PC-9 (cell line): ENCODE measurements at regions of chr15 and their contacts with region 1.

Region 1: GRCh38 chr15:84588053-84588874 is 12.5 kb upstream of the ZSCAN2 start:
- DNase-seq: peak; percentile 57 to 83
- H3K4me3 ChIP-seq: peak overlapping the region; percentile 54; the same call in 1 of the 2 replicates
- H3K27ac ChIP-seq: no peak overlapping the region
- H3K4me1 ChIP-seq: no peaks in the 10 kb centered on the region; the same call in 1 of the 2 replicates
- H3K27me3 ChIP-seq: no peaks in the 10 kb centered on the region
- CTCF ChIP-seq: peak; percentile 81

Region 2: DNA sequence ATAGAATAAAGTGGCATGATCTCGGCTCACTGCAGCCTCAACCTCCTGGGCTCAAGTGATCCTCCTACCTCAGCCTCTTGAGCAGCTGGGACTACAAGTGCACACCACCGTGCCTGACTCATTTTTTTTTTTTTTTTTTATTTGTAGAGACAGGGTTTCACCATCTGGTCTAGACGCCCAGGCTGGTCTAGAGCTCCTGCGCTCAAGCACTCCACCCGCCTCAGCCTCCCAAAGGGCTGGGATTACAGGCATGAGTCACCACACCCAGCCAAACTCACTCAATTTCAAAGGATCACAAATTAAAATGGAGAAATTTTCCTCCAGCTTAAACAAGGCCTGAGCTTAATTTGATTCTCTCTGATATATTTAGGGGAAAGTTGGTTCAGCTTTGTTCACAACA is 97.0 kb after region 1 on chr15:
- CTCF ChIA-PET with region 1: interaction called, 10 read pairs
- POLR2A ChIA-PET with region 1: no interaction called
- intact Hi-C with region 1: no loop called
- DNase-seq: peak; percentile 59 to 78
- H3K4me3 ChIP-seq: no peak overlapping the region
- H3K27ac ChIP-seq: peak overlapping the region; percentile 57
- H3K4me1 ChIP-seq: peaks cover 19% of the 10 kb centered on the region
- H3K27me3 ChIP-seq: no peaks in the 10 kb centered on the region
- CTCF ChIP-seq: no peak

Region 3: DNA sequence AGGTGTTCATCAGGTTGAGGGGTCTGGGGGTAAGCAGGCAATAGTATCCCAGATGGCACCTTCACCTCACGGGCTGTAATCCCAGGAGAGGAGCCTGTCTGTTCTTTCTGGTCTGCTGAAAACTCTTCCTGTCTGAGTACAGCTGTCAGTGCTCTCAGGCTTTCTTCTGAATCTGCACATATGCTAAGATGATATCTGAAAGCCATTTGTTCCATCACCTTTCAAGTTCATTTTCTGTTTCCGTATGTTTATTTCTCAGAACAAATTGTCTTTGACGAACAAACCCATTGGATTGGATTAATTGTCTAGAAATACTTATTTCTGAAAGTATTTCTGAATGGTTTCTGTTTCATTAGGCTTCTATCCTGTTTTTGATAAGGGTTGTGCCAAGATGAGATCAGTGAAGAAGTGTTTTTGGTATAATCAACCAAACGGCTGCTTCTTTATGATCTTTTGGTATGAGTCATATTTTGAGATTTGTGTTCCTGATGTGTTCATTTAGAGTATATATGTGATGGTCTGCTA is 173.4 kb after region 1 on chr15:
- CTCF ChIA-PET with region 1: no interaction called
- POLR2A ChIA-PET with region 1: no interaction called
- intact Hi-C with region 1: no loop called
- DNase-seq: no peak
- H3K4me3 ChIP-seq: no peak overlapping the region
- H3K27ac ChIP-seq: no peak overlapping the region
- H3K4me1 ChIP-seq: no peaks in the 10 kb centered on the region
- H3K27me3 ChIP-seq: no peaks in the 10 kb centered on the region
- CTCF ChIP-seq: no peak

Region 4: GRCh38 chr15:85044251-85044853 is 456.1 kb after region 1 on chr15:
- CTCF ChIA-PET with region 1: no interaction called
- POLR2A ChIA-PET with region 1: no interaction called
- intact Hi-C with region 1: loop called (anchors 5 kb)
- DNase-seq: peak in 1 of 2 experiments; percentile 47
- H3K4me3 ChIP-seq: no peak overlapping the region
- H3K27ac ChIP-seq: no peak overlapping the region
- H3K4me1 ChIP-seq: peaks cover 44% of the 10 kb centered on the region
- H3K27me3 ChIP-seq: no peaks in the 10 kb centered on the region
- CTCF ChIP-seq: peak; percentile 64

Region 5: GRCh38 chr15:85289677-85290365 is 701.6 kb after region 1 on chr15:
- CTCF ChIA-PET with region 1: no interaction called
- POLR2A ChIA-PET with region 1: no interaction called
- intact Hi-C with region 1: loop called (anchors 1 kb)
- DNase-seq: peak in 1 of 2 experiments; percentile 42
- H3K4me3 ChIP-seq: no peak overlapping the region
- H3K27ac ChIP-seq: no peak overlapping the region
- H3K4me1 ChIP-seq: no peaks in the 10 kb centered on the region
- H3K27me3 ChIP-seq: no peaks in the 10 kb centered on the region
- CTCF ChIP-seq: peak; percentile 78

Region 6: GRCh38 chr15:85582131-85583079 is 994.1 kb after region 1 on chr15:
- CTCF ChIA-PET with region 1: no interaction called
- POLR2A ChIA-PET with region 1: no interaction called
- intact Hi-C with region 1: loop called (anchors 10 kb)
- DNase-seq: no peak
- H3K4me3 ChIP-seq: no peak overlapping the region
- H3K27ac ChIP-seq: peak overlapping the region; percentile 83
- H3K4me1 ChIP-seq: peaks cover 47% of the 10 kb centered on the region
- H3K27me3 ChIP-seq: no peaks in the 10 kb centered on the region
- CTCF ChIP-seq: no peak